ENCODE measurements at regions of chr18 and their contacts with region 1.

Region 1: GRCh38 chr18:57970356-57971080 is 73.5 kb upstream of the NEDD4L start:
- DNase-seq: no peak
- ATAC-seq: 0 out of 3 replicates have a peak, but pooled peaks have one; percentile 44
- H3K4me3 ChIP-seq: no peak overlapping the region
- H3K27ac ChIP-seq: no peak overlapping the region
- H3K4me1 ChIP-seq: no peaks in the 10 kb centered on the region
- H3K27me3 ChIP-seq: no peaks in the 10 kb centered on the region
- CTCF ChIP-seq: peak; percentile 22 to 39 (median 23); a peak in 5 of 6 replicates
- EP300 ChIP-seq: no peak
- POLR2A ChIP-seq: no peak
- RAD21 ChIP-seq: no peak

Region 2: DNA sequence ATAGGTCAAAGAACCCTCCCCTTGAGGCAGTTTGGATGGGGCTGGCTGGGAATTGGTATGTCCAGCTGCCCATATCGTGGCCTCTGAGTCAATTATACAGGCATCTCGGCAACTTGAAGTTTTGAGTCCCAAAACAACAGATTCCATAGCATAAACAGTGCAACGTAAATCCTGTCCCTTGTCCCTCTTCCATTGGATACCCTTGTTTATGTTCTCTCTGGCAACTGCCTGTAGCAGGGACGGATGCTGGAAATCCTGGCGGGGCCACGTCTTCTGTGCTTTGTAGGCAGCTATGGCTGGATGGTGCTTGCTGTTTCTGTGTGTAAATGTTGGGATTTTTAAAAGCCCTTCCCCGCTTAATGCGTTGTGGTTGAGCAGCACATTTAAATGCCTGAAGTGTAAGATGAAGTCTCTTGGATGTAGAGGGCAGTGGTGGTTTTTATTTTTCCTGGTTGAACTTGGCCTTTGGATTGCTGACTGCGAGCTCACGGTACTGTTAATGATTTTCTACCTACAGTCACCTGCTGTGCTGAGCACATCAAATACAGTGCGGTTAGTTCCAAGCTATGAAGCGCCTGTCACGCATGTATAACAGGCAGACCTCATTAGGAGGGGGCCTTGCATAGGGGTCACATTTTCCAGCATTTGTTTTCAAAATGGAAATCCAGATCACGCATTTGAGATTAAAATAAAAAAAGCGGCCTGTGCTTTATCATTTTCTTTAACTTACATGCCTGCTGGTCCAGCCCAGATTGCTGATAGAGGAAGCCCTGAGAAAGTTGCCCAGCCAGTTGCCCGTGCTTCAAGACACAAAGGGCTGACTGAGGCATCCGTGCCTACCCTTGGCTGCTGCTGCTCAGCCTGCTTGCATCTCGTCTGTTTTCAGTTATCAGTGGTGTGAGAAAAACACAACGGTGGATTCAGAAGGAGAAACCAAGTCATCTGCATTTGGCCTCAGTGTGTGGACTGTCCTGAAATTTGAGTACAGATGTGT is 158.2 kb after region 1 on chr18:
- CTCF ChIA-PET with region 1: interaction called, 3 read pairs
- POLR2A ChIA-PET with region 1: no interaction called
- RAD21 ChIA-PET with region 1: no interaction called
- SMC1A ChIA-PET with region 1: no interaction called
- in situ Hi-C with region 1: no loop called
- intact Hi-C with region 1: loop called (anchors 5 kb)
- DNase-seq: no peak
- ATAC-seq: no peak
- H3K4me3 ChIP-seq: no peak overlapping the region
- H3K27ac ChIP-seq: no peak overlapping the region
- H3K4me1 ChIP-seq: no peaks in the 10 kb centered on the region
- H3K27me3 ChIP-seq: no peaks in the 10 kb centered on the region
- CTCF ChIP-seq: no peak
- EP300 ChIP-seq: no peak
- POLR2A ChIP-seq: no peak
- RAD21 ChIP-seq: no peak